ENCODE measurements at regions of chr3 and their contacts with region 1.

Region 1: DNA sequence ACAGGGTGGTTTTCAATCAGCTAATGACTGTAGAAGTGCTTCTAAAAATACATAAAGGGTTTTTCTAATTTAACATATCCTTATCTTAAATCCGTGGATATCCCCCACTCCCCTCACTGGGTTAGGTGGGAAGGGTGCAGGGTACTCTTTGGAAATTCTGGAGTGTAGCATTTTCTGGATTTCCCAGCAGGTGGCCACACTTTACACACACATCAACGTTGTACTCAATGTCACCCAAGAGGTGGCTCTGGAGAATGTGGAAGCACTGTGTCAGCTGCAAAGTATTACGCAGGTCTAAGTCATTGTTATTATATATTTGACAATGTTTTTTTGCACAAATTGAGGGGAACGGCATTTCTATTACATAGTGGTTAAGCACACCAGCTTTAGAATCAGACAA is 168.8 kb downstream of the CHDH start:
- DNase-seq: no peak
- ATAC-seq: peak; percentile 92
- H3K4me3 ChIP-seq: no peak overlapping the region
- H3K27ac ChIP-seq: no peak overlapping the region
- H3K4me1 ChIP-seq: no peaks in the 10 kb centered on the region
- H3K27me3 ChIP-seq: peaks cover 23% of the 10 kb centered on the region; the same call in 1 of the 2 replicates
- CTCF ChIP-seq: peak; percentile 33 to 52 (median 46); a peak in 4 of 6 replicates
- POLR2A ChIP-seq: no peak
- RAD21 ChIP-seq: peak; percentile 37

Region 2: DNA sequence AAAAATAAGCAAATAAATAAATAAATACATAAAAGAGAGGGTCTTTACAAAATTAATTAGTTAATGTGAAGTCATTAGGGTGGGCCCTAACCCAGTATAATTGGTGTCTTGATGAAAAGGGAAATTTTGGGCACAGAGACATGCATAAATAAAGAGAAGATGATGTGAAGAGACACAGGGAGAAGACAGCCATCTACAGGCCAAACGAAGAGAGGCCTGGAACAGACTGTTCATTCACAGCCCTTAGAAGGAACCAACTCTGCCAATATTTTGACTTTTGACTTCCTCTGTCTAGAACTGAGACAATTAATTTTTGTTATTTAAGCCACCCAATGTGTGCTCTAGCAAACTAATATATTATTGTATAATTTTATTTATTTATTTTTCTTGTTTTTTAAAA is 243.9 kb after region 1 on chr3:
- CTCF ChIA-PET with region 1: no interaction called
- POLR2A ChIA-PET with region 1: no interaction called
- RAD21 ChIA-PET with region 1: no interaction called
- intact Hi-C with region 1: loop called (anchors 5 kb)
- DNase-seq: no peak
- ATAC-seq: peak; percentile 78
- H3K4me3 ChIP-seq: no peak overlapping the region
- H3K27ac ChIP-seq: no peak overlapping the region
- H3K4me1 ChIP-seq: no peaks in the 10 kb centered on the region
- H3K27me3 ChIP-seq: peaks cover 5% of the 10 kb centered on the region; the same call in 1 of the 2 replicates
- CTCF ChIP-seq: peak; percentile 51 to 62 (median 56); a peak in 5 of 6 replicates
- POLR2A ChIP-seq: no peak
- RAD21 ChIP-seq: peak; percentile 66